ENCODE measurements at regions of chrX and their contacts with region 1.

Region 1: DNA sequence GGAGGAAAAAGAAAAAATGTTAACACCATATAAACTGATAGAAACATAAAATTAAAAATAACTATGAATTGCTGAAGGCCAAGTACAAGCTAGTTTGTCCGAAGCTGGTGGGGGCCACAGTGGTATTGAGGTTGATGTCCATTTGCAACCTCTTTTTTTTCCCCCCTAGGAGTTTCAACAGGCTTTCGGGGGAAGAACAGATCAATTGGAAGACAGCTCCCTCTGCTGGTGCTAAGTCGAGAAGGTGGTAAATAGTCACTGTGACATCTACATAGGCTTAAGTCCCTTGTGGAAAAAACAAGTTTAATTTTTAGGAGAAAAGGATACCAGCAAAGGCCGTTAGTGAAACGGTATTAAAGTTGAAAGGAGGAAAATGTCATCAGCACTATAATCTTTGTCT is 115.7 kb upstream of the ZXDA start:
- DNase-seq: no peak
- ATAC-seq: peak; percentile 69
- H3K4me3 ChIP-seq: no peak overlapping the region
- H3K27ac ChIP-seq: no peak overlapping the region
- H3K4me1 ChIP-seq: no peaks in the 10 kb centered on the region
- H3K27me3 ChIP-seq: no peaks in the 10 kb centered on the region
- CTCF ChIP-seq: peak; percentile 57 to 65 (median 61)
- EP300 ChIP-seq: no peak
- POLR2A ChIP-seq: no peak
- RAD21 ChIP-seq: peak; percentile 61

Region 2: GRCh38 chrX:57232658-57233360 is 793.2 kb before region 1 on chrX:
- CTCF ChIA-PET with region 1: no interaction called
- POLR2A ChIA-PET with region 1: no interaction called
- RAD21 ChIA-PET with region 1: no interaction called
- SMC1A ChIA-PET with region 1: no interaction called
- in situ Hi-C with region 1: no loop called
- intact Hi-C with region 1: no loop called
- DNase-seq: peak; percentile 25
- ATAC-seq: peak; percentile 94
- H3K4me3 ChIP-seq: no peak overlapping the region
- H3K27ac ChIP-seq: no peak overlapping the region; the same call in 1 of the 2 replicates
- H3K4me1 ChIP-seq: no peaks in the 10 kb centered on the region
- H3K27me3 ChIP-seq: no peaks in the 10 kb centered on the region
- CTCF ChIP-seq: no peak
- EP300 ChIP-seq: no peak; a peak in 1 of 4 replicates
- POLR2A ChIP-seq: no peak
- RAD21 ChIP-seq: no peak

Region 3: GRCh38 chrX:57573754-57574153 is 452.2 kb before region 1 on chrX:
- CTCF ChIA-PET with region 1: interaction called, 3 read pairs
- POLR2A ChIA-PET with region 1: no interaction called
- RAD21 ChIA-PET with region 1: no interaction called
- SMC1A ChIA-PET with region 1: no interaction called
- in situ Hi-C with region 1: loop called (anchors 25 kb)
- intact Hi-C with region 1: loop called (anchors 5 kb)
- DNase-seq: no peak
- ATAC-seq: peak; percentile 75
- H3K4me3 ChIP-seq: no peak overlapping the region
- H3K27ac ChIP-seq: no peak overlapping the region
- H3K4me1 ChIP-seq: no peaks in the 10 kb centered on the region
- H3K27me3 ChIP-seq: no peaks in the 10 kb centered on the region
- CTCF ChIP-seq: peak; percentile 34 to 49 (median 41); a peak in 5 of 6 replicates
- EP300 ChIP-seq: no peak
- POLR2A ChIP-seq: no peak
- RAD21 ChIP-seq: peak; percentile 55

Region 4: GRCh38 chrX:57929373-57929772 is 96.6 kb before region 1 on chrX:
- CTCF ChIA-PET with region 1: no interaction called
- POLR2A ChIA-PET with region 1: no interaction called
- RAD21 ChIA-PET with region 1: no interaction called
- SMC1A ChIA-PET with region 1: no interaction called
- in situ Hi-C with region 1: loop called (anchors 25 kb)
- intact Hi-C with region 1: no loop called
- DNase-seq: no peak
- ATAC-seq: peak; percentile 68
- H3K4me3 ChIP-seq: no peak overlapping the region
- H3K27ac ChIP-seq: no peak overlapping the region
- H3K4me1 ChIP-seq: no peaks in the 10 kb centered on the region
- H3K27me3 ChIP-seq: no peaks in the 10 kb centered on the region
- CTCF ChIP-seq: peak; percentile 46 to 55 (median 53); a peak in 5 of 6 replicates
- EP300 ChIP-seq: no peak
- POLR2A ChIP-seq: no peak
- RAD21 ChIP-seq: peak; percentile 51

Region 5: DNA sequence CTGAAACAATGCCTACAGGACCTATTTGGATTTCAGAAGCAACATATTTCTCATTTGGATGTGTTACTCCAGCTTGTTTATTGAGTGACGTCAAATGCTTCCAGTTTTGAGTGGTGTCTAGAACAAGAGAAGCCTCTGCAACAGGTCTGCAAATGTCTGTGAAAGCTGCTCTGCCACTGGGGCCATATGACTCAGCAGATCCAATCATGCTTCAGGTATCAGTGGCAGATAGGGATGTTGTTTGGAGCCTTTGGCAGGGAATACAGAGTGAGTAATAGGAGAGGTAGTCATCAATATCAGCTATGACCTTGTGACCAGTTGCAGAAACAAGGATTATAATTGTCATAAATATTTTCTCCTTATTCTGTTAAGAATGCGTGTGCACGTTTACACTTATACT is 25.4 kb after region 1 on chrX:
- CTCF ChIA-PET with region 1: no interaction called
- POLR2A ChIA-PET with region 1: no interaction called
- RAD21 ChIA-PET with region 1: no interaction called
- SMC1A ChIA-PET with region 1: no interaction called
- in situ Hi-C with region 1: no loop called
- intact Hi-C with region 1: no loop called
- DNase-seq: no peak
- ATAC-seq: no peak
- H3K4me3 ChIP-seq: no peak overlapping the region
- H3K27ac ChIP-seq: no peak overlapping the region
- H3K4me1 ChIP-seq: no peaks in the 10 kb centered on the region
- H3K27me3 ChIP-seq: no peaks in the 10 kb centered on the region
- CTCF ChIP-seq: no peak
- EP300 ChIP-seq: no peak
- POLR2A ChIP-seq: no peak
- RAD21 ChIP-seq: no peak

Measured in GM12878 (cell line).